ENCODE measurements at regions of chr4 and their contacts with region 1.

Region 1: GRCh38 chr4:6673660-6674499 is 19.8 kb upstream of the S100P start:
- DNase-seq: peak; percentile 89 to 99
- ATAC-seq: peak; percentile 83 to 92 (median 89)
- H3K4me3 ChIP-seq: peak overlapping the region; percentile 46
- H3K4me3 Mint-ChIP-seq: peak overlapping the region; percentile 95
- H3K27ac ChIP-seq: peak overlapping the region; percentile 74
- H3K27ac Mint-ChIP-seq: peak overlapping the region; percentile 96 to 97
- H3K4me1 ChIP-seq: peaks cover 36% of the 10 kb centered on the region
- H3K4me1 Mint-ChIP-seq: peaks cover 38 to 49% of the 10 kb centered on the region in 2 donors
- H3K27me3 ChIP-seq: no peaks in the 10 kb centered on the region
- H3K27me3 Mint-ChIP-seq: no peaks in the 10 kb centered on the region
- CTCF ChIP-seq: no peak

Region 2: GRCh38 chr4:6640292-6641163 is 33.4 kb before region 1 on chr4 and contains the start of gene MRFAP1:
- intact Hi-C with region 1: loop called (anchors 1 kb)
- DNase-seq: peak; percentile 92 to 98
- ATAC-seq: peak; percentile 80 to 96 (median 86)
- H3K4me3 ChIP-seq: peak within 1 kb of the TSS; percentile 92
- H3K4me3 Mint-ChIP-seq: peak within 1 kb of the TSS; percentile 100
- H3K27ac ChIP-seq: peak within 1 kb of the TSS; percentile 95
- H3K27ac Mint-ChIP-seq: peak within 1 kb of the TSS; percentile 100
- H3K4me1 ChIP-seq: peaks cover 27% of the 10 kb centered on the region
- H3K4me1 Mint-ChIP-seq: peaks cover 37 to 41% of the 10 kb centered on the region in 2 donors
- H3K27me3 ChIP-seq: no peaks in the 10 kb centered on the region
- H3K27me3 Mint-ChIP-seq: no peaks in the 10 kb centered on the region
- CTCF ChIP-seq: no peak
- total RNA-seq, gene MRFAP1: 105 to 146 (median 146) TPM

Region 3: DNA sequence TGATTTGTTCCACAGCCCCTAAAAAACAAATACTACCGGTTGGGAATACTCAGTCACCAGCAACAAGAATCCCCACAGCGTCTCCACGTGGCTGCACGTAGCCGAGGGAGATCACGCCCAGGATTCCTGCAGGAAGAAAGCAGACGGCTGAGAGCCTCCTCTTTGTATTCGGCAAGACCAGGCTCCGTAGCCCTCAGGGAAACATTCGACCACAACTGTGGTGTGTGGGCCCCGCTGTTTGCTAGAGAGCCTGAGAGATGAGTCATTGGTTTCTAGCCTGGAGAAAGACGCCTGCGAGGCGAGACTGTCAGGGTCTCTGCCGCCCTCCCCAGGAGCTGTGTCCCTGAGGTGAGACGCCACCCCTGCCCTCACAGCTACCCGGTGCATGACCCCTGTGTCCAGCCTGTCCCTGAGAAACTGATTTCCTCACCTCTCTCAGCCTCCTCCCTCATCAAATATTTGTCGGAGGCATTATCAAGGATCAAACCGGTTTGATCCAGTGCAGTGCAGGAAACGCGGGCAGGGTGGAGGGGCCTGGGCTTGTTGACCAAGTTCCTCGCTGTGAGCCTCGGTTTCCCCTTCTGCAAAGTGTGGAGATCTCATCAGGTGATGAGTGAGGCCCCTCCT is 15.1 kb after region 1 on chr4:
- intact Hi-C with region 1: loop called (anchors 1 kb)
- DNase-seq: peak; percentile 79 to 84
- ATAC-seq: peak; percentile 80 to 85 (median 82)
- H3K4me3 ChIP-seq: peak overlapping the region; percentile 45
- H3K4me3 Mint-ChIP-seq: peak overlapping the region; percentile 98
- H3K27ac ChIP-seq: peak overlapping the region; percentile 77
- H3K27ac Mint-ChIP-seq: peak overlapping the region; percentile 97 to 98
- H3K4me1 ChIP-seq: peaks cover 83% of the 10 kb centered on the region
- H3K4me1 Mint-ChIP-seq: peaks cover 53 to 80% of the 10 kb centered on the region in 2 donors
- H3K27me3 ChIP-seq: no peaks in the 10 kb centered on the region
- H3K27me3 Mint-ChIP-seq: no peaks in the 10 kb centered on the region
- CTCF ChIP-seq: no peak

Region 4: GRCh38 chr4:6709230-6710114 is 35.6 kb after region 1 on chr4 and contains the start of gene MRFAP1L1:
- intact Hi-C with region 1: loop called (anchors 1 kb)
- DNase-seq: peak; percentile 96 to 98
- ATAC-seq: peak; percentile 86 to 99 (median 92)
- H3K4me3 ChIP-seq: peak within 1 kb of the TSS; percentile 94
- H3K4me3 Mint-ChIP-seq: peak within 1 kb of the TSS; percentile 99
- H3K27ac ChIP-seq: peak within 1 kb of the TSS; percentile 87
- H3K27ac Mint-ChIP-seq: peak within 1 kb of the TSS; percentile 98 to 100
- H3K4me1 ChIP-seq: peaks cover 27% of the 10 kb centered on the region
- H3K4me1 Mint-ChIP-seq: peaks cover 69 to 70% of the 10 kb centered on the region in 2 donors
- H3K27me3 ChIP-seq: no peaks in the 10 kb centered on the region
- H3K27me3 Mint-ChIP-seq: no peaks in the 10 kb centered on the region
- CTCF ChIP-seq: no peak
- total RNA-seq, gene MRFAP1L1: 38.4 to 60.9 (median 40.8) TPM

Region 5: GRCh38 chr4:6783053-6783981 is 109.4 kb after region 1 on chr4:
- intact Hi-C with region 1: loop called (anchors 1 kb)
- DNase-seq: peak; percentile 87 to 92
- ATAC-seq: peak; percentile 76 to 90 (median 77)
- H3K4me3 ChIP-seq: peak overlapping the region; percentile 74
- H3K4me3 Mint-ChIP-seq: peak overlapping the region; percentile 90
- H3K27ac ChIP-seq: peak overlapping the region; percentile 97
- H3K27ac Mint-ChIP-seq: peak overlapping the region; percentile 84 to 88
- H3K4me1 ChIP-seq: peaks cover 25% of the 10 kb centered on the region
- H3K4me1 Mint-ChIP-seq: peaks cover 54 to 57% of the 10 kb centered on the region in 2 donors
- H3K27me3 ChIP-seq: no peaks in the 10 kb centered on the region
- H3K27me3 Mint-ChIP-seq: no peaks in the 10 kb centered on the region
- CTCF ChIP-seq: no peak

Region 6: GRCh38 chr4:6885951-6886557 is 212.2 kb after region 1 on chr4:
- intact Hi-C with region 1: no loop called
- DNase-seq: peak in 1 of 2 donors; percentile 49
- ATAC-seq: peak; percentile 84 to 93 (median 90)
- H3K4me3 ChIP-seq: no peak overlapping the region
- H3K4me3 Mint-ChIP-seq: no peak overlapping the region
- H3K27ac ChIP-seq: no peak overlapping the region
- H3K27ac Mint-ChIP-seq: peak overlapping the region in 1 of 2 donors; percentile 74
- H3K4me1 ChIP-seq: peaks cover 20% of the 10 kb centered on the region
- H3K4me1 Mint-ChIP-seq: peaks cover 0 to 22% of the 10 kb centered on the region in 2 donors
- H3K27me3 ChIP-seq: no peaks in the 10 kb centered on the region
- H3K27me3 Mint-ChIP-seq: no peaks in the 10 kb centered on the region
- CTCF ChIP-seq: no peak